ENCODE measurements at regions of chr20 and their contacts with region 1.

Region 1: GRCh38 chr20:46520976-46521579 is 7.7 kb upstream of the ZNF334 start:
- DNase-seq: peak; percentile 51
- H3K4me3 Mint-ChIP-seq: no peak overlapping the region
- H3K27ac Mint-ChIP-seq: no peak overlapping the region
- H3K4me1 Mint-ChIP-seq: peaks cover 4% of the 10 kb centered on the region
- H3K27me3 Mint-ChIP-seq: peaks cover 18% of the 10 kb centered on the region

Region 2: GRCh38 chr20:46416421-46416820 is 104.7 kb before region 1 on chr20:
- intact Hi-C with region 1: no loop called
- DNase-seq: no peak
- H3K4me3 Mint-ChIP-seq: no peak overlapping the region
- H3K27ac Mint-ChIP-seq: no peak overlapping the region
- H3K4me1 Mint-ChIP-seq: no peaks in the 10 kb centered on the region
- H3K27me3 Mint-ChIP-seq: peaks cover 38% of the 10 kb centered on the region

Region 3: DNA sequence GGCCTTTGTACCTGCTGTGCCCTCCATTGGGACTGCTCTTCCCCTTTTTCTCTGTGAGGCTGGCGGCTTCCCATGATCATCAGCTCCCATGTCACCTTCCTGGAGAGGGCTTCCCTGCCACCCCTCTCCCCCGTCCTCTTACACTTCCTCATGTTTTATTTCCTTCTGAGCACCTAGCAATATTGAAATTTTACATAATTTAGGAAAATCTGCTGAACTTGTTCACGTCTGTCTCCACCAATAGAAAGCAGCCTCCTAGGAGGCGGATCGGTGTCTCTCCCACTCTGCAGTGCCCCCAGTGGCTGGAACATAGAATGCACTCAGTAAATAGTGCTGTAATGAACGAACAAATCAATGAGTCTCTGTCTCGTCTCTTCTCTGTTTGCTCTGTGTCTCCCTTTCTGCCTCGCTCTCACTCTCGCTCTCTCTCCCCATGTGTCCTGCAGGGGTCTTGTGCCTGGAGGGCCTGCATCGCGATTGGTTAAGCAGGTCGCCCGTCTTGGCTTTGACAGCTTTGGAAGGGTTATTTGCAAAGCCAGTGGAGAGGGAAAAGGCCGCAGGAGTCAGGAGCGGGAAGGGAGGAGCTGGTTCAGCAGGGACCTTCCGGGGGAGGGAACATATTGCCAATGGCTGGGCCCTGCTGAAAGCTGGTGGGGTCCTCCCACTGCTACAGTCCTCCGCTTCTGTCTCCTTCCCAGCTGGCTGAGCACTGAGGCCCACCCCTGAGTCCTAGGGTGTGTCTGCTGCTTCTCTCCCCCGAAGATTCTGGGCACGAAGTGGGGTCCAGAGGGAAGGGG is 41.5 kb after region 1 on chr20:
- intact Hi-C with region 1: loop called (anchors 5 kb)
- DNase-seq: peak; percentile 51
- H3K4me3 Mint-ChIP-seq: no peak overlapping the region
- H3K27ac Mint-ChIP-seq: no peak overlapping the region
- H3K4me1 Mint-ChIP-seq: peaks cover 34% of the 10 kb centered on the region
- H3K27me3 Mint-ChIP-seq: peaks cover 3% of the 10 kb centered on the region

Region 4: GRCh38 chr20:46607191-46607848 is 86.2 kb after region 1 on chr20:
- intact Hi-C with region 1: loop called (anchors 5 kb)
- DNase-seq: no peak
- H3K4me3 Mint-ChIP-seq: no peak overlapping the region
- H3K27ac Mint-ChIP-seq: no peak overlapping the region
- H3K4me1 Mint-ChIP-seq: peaks cover 2% of the 10 kb centered on the region
- H3K27me3 Mint-ChIP-seq: peaks cover 10% of the 10 kb centered on the region

Region 5: GRCh38 chr20:46681032-46681854 is 160.2 kb after region 1 on chr20:
- intact Hi-C with region 1: loop called (anchors 1 kb)
- DNase-seq: peak; percentile 44
- H3K4me3 Mint-ChIP-seq: no peak overlapping the region
- H3K27ac Mint-ChIP-seq: no peak overlapping the region
- H3K4me1 Mint-ChIP-seq: peaks cover 26% of the 10 kb centered on the region
- H3K27me3 Mint-ChIP-seq: no peaks in the 10 kb centered on the region